SK-N-SH (cell line): ENCODE measurements at regions of chr20 and their contacts with region 1.

Region 1: DNA sequence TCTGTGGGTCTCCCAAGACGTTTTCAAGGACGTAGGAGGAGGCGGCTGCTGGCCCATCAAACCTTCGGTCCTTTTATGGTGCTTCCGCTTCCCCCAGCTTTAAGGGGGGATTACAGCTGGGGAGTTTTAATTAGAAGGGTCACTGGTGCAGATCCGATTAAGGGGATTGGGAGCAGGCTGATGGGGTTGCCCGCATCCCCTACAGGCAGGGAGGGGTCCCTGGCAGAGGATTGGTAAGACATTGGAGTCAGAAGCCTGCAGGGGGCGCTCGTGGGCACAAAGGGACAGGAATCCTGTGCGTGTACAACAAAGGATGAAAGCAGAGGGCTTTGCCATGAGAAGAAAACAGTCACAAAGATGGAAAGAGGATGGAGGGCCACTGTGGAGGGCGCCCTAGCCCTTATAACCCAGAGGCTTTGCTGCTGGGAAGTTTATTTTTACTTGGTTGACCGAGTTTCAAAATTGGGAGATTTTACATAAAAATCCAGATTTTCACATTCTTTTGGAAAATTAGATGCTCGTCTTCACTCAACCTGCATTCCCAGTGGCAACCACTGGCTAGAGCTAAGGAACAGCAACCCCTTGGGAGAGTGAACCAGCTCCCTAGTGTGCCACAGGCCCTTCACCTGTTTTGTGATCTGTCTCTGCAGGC is 97.9 kb downstream of the KCNB1 start:
- DNase-seq: peak; percentile 64
- H3K4me3 ChIP-seq: no peak overlapping the region; a peak in 1 of 4 replicates
- H3K27ac ChIP-seq: peak overlapping the region in 1 of 2 experiments; percentile 39; a peak in 1 of 4 replicates
- H3K4me1 ChIP-seq: peaks cover 0 to 63% of the 10 kb centered on the region in 2 experiments; a peak in 2 of 4 replicates
- H3K27me3 ChIP-seq: no peaks in the 10 kb centered on the region
- CTCF ChIP-seq: peak; percentile 83
- EP300 ChIP-seq: no peak
- RAD21 ChIP-seq: peak; percentile 62

Region 2: GRCh38 chr20:49338061-49338460 is 46.5 kb before region 1 on chr20:
- CTCF ChIA-PET with region 1: interaction called, 76 read pairs
- POLR2A ChIA-PET with region 1: no interaction called
- DNase-seq: no peak
- H3K4me3 ChIP-seq: no peak overlapping the region
- H3K27ac ChIP-seq: no peak overlapping the region
- H3K4me1 ChIP-seq: peaks cover 0 to 2% of the 10 kb centered on the region in 2 experiments; a peak in 1 of 4 replicates
- H3K27me3 ChIP-seq: no peaks in the 10 kb centered on the region
- CTCF ChIP-seq: no peak
- EP300 ChIP-seq: no peak
- RAD21 ChIP-seq: no peak

Region 3: GRCh38 chr20:49367113-49367512 is 17.4 kb before region 1 on chr20:
- CTCF ChIA-PET with region 1: interaction called, 55 read pairs
- POLR2A ChIA-PET with region 1: interaction called, 5 read pairs
- DNase-seq: peak; percentile 47
- H3K4me3 ChIP-seq: no peak overlapping the region
- H3K27ac ChIP-seq: peak overlapping the region in 1 of 2 experiments; percentile 72; a peak in 2 of 4 replicates
- H3K4me1 ChIP-seq: peaks cover 0 to 24% of the 10 kb centered on the region in 2 experiments; a peak in 2 of 4 replicates
- H3K27me3 ChIP-seq: peaks cover 4% of the 10 kb centered on the region; the same call in 1 of the 2 replicates
- CTCF ChIP-seq: no peak
- EP300 ChIP-seq: 0 out of 4 replicates have a peak, but pooled peaks of 1 of the 2 experiments have one; percentile 4
- RAD21 ChIP-seq: no peak

Region 4: GRCh38 chr20:49397525-49397924 is 13.0 kb after region 1 on chr20:
- CTCF ChIA-PET with region 1: interaction called, 16 read pairs
- POLR2A ChIA-PET with region 1: no interaction called
- DNase-seq: no peak
- H3K4me3 ChIP-seq: no peak overlapping the region
- H3K27ac ChIP-seq: no peak overlapping the region
- H3K4me1 ChIP-seq: no peaks in the 10 kb centered on the region; a peak in 1 of 4 replicates
- H3K27me3 ChIP-seq: no peaks in the 10 kb centered on the region
- CTCF ChIP-seq: no peak
- EP300 ChIP-seq: no peak
- RAD21 ChIP-seq: no peak

Region 5: GRCh38 chr20:49424536-49424935 is 40.0 kb after region 1 on chr20:
- CTCF ChIA-PET with region 1: interaction called, 11 read pairs
- POLR2A ChIA-PET with region 1: interaction called, 3 read pairs
- DNase-seq: peak; percentile 79
- H3K4me3 ChIP-seq: no peak overlapping the region
- H3K27ac ChIP-seq: peak overlapping the region in 1 of 2 experiments; percentile 78; a peak in 2 of 4 replicates
- H3K4me1 ChIP-seq: peaks cover 0 to 23% of the 10 kb centered on the region in 2 experiments; a peak in 2 of 4 replicates
- H3K27me3 ChIP-seq: no peaks in the 10 kb centered on the region
- CTCF ChIP-seq: no peak
- EP300 ChIP-seq: no peak
- RAD21 ChIP-seq: peak; percentile 22; the same call in 1 of the 2 replicates

Region 6: DNA sequence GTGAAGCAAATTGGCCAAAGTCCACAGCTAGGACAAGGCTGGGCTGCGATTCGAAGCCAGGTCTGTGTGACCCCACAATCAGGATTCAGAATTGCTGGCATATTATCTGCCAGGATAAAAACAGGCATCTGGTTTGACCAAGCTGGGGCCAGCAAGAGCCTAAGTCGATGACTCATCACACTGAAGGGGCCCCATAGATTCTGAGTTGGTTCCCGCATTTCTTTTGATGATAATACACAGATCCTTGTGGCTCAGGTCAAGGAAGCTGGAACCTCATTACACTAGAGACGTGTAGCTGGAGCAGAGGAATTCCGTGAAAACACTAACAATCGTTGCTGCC is 91.4 kb after region 1 on chr20:
- CTCF ChIA-PET with region 1: interaction called, 141 read pairs
- POLR2A ChIA-PET with region 1: no interaction called
- DNase-seq: no peak
- H3K4me3 ChIP-seq: no peak overlapping the region
- H3K27ac ChIP-seq: no peak overlapping the region
- H3K4me1 ChIP-seq: peaks cover 0 to 5% of the 10 kb centered on the region in 2 experiments; a peak in 1 of 4 replicates
- H3K27me3 ChIP-seq: no peaks in the 10 kb centered on the region
- CTCF ChIP-seq: no peak
- EP300 ChIP-seq: no peak
- RAD21 ChIP-seq: no peak